GM12878 (cell line): ENCODE measurements at regions of chr17 and their contacts with region 1.

Region 1: GRCh38 chr17:18356624-18357023 is 6.7 kb downstream of the SHMT1 start:
- DNase-seq: no peak
- ATAC-seq: no peak
- H3K4me3 ChIP-seq: no peak overlapping the region
- H3K27ac ChIP-seq: no peak overlapping the region
- H3K4me1 ChIP-seq: no peaks in the 10 kb centered on the region
- H3K27me3 ChIP-seq: no peaks in the 10 kb centered on the region
- CTCF ChIP-seq: no peak
- EP300 ChIP-seq: no peak
- POLR2A ChIP-seq: no peak
- RAD21 ChIP-seq: no peak

Region 2: GRCh38 chr17:18309202-18309601 is 47.4 kb before region 1 on chr17:
- CTCF ChIA-PET with region 1: no interaction called
- POLR2A ChIA-PET with region 1: no interaction called
- RAD21 ChIA-PET with region 1: no interaction called
- SMC1A ChIA-PET with region 1: interaction called, 3 read pairs
- in situ Hi-C with region 1: loop called (anchors 5 kb)
- intact Hi-C with region 1: no loop called
- DNase-seq: no peak
- ATAC-seq: no peak
- H3K4me3 ChIP-seq: no peak overlapping the region
- H3K27ac ChIP-seq: no peak overlapping the region
- H3K4me1 ChIP-seq: no peaks in the 10 kb centered on the region
- H3K27me3 ChIP-seq: no peaks in the 10 kb centered on the region
- CTCF ChIP-seq: no peak
- EP300 ChIP-seq: no peak
- POLR2A ChIP-seq: no peak
- RAD21 ChIP-seq: no peak

Region 3: GRCh38 chr17:18382441-18383078 is 25.9 kb after region 1 on chr17:
- CTCF ChIA-PET with region 1: no interaction called
- POLR2A ChIA-PET with region 1: no interaction called
- RAD21 ChIA-PET with region 1: no interaction called
- SMC1A ChIA-PET with region 1: no interaction called
- in situ Hi-C with region 1: no loop called
- intact Hi-C with region 1: no loop called
- DNase-seq: no peak
- ATAC-seq: no peak
- H3K4me3 ChIP-seq: no peak overlapping the region
- H3K27ac ChIP-seq: no peak overlapping the region
- H3K4me1 ChIP-seq: peaks cover 2% of the 10 kb centered on the region; the same call in 1 of the 2 replicates
- H3K27me3 ChIP-seq: no peaks in the 10 kb centered on the region; a peak in 1 of 4 replicates
- CTCF ChIP-seq: no peak
- EP300 ChIP-seq: no peak
- POLR2A ChIP-seq: no peak
- RAD21 ChIP-seq: no peak